OCI-LY7 (cell line): ENCODE measurements at regions of chr11 and their contacts with region 1.

Region 1: GRCh38 chr11:77091146-77091940 is 11.3 kb upstream of the OMP start:
- DNase-seq: peak; percentile 80
- H3K4me3 ChIP-seq: no peak overlapping the region
- H3K27ac ChIP-seq: no peak overlapping the region
- H3K4me1 ChIP-seq: no peaks in the 10 kb centered on the region
- CTCF ChIP-seq: peak; percentile 91

Region 2: DNA sequence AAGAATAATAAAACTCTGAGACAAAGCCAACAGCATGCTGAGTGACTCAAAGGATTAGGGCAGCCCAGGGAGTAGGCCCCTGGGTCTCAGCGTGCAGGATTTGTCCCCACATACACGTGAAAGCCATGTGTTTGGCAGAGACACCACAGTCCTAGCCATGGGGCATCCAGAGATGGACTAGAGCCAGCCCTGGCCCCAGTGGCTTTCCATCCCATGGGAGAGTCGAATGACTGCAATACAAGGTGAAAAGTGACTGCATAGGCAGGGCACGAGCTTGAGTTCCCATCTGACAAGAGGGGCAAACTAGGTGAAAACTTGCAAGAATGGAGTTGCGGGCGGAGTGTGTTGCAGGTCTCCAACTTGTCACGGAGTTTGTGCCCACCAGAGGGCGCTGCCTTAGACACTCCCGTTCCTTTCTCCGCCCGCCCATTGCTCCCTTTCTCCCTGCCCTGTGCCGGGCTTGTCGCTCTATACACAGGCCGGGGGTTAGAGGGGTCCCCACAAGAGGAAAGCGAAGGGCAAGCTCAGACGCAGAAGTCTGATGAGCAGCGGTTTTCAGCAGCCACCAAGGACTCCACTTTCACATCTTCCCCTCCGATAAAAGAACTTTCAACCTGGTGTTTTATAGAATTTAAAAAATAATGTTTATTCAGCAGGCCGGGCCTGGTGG is 284.0 kb before region 1 on chr11:
- CTCF ChIA-PET with region 1: no interaction called
- POLR2A ChIA-PET with region 1: no interaction called
- intact Hi-C with region 1: loop called (anchors 1 kb)
- DNase-seq: peak; percentile 69
- H3K4me3 ChIP-seq: no peak overlapping the region
- H3K27ac ChIP-seq: no peak overlapping the region
- H3K4me1 ChIP-seq: no peaks in the 10 kb centered on the region
- CTCF ChIP-seq: peak; percentile 87

Region 3: DNA sequence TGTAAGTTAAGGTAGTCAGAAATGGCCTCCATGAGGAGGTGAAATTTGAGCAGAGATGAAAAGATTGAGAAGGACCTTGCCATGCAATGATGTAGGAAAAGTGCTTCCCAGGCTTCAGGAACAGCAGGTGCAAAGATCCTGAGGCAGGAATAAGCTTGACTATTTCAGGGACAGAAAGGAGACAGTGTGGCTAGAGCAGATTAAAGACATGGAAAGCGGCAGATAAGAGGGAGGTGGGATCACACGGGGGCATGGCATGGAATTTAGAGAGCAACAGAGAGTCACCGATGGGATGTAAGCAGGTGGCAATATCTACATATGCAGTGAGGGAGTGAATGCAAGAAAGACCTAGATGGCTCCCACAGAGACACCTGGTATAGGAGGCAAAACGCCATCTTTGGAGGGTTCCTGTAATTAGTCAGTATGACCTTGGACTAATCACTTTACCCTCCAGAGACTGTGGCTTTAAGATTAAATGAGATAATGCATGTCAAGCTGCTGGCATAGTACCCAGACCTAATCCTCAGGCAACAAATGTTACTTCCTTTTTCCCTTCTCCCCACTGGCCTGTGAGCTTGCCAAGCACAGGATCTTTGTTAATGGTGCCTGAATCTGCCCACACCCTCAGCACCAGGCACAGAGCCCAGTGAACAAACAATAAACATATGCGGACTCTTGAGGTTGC is 255.3 kb before region 1 on chr11:
- CTCF ChIA-PET with region 1: no interaction called
- POLR2A ChIA-PET with region 1: no interaction called
- intact Hi-C with region 1: no loop called
- DNase-seq: no peak
- H3K4me3 ChIP-seq: no peak overlapping the region
- H3K27ac ChIP-seq: no peak overlapping the region
- H3K4me1 ChIP-seq: no peaks in the 10 kb centered on the region
- CTCF ChIP-seq: no peak

Region 4: GRCh38 chr11:76962583-76963416 is 128.5 kb before region 1 on chr11:
- CTCF ChIA-PET with region 1: no interaction called
- POLR2A ChIA-PET with region 1: no interaction called
- intact Hi-C with region 1: no loop called
- DNase-seq: no peak
- H3K4me3 ChIP-seq: no peak overlapping the region
- H3K27ac ChIP-seq: no peak overlapping the region
- H3K4me1 ChIP-seq: no peaks in the 10 kb centered on the region
- CTCF ChIP-seq: no peak

Region 5: GRCh38 chr11:76997512-76997911 is 93.8 kb before region 1 on chr11:
- CTCF ChIA-PET with region 1: no interaction called
- POLR2A ChIA-PET with region 1: no interaction called
- intact Hi-C with region 1: no loop called
- DNase-seq: no peak
- H3K4me3 ChIP-seq: no peak overlapping the region
- H3K27ac ChIP-seq: no peak overlapping the region
- H3K4me1 ChIP-seq: no peaks in the 10 kb centered on the region
- CTCF ChIP-seq: no peak

Region 6: DNA sequence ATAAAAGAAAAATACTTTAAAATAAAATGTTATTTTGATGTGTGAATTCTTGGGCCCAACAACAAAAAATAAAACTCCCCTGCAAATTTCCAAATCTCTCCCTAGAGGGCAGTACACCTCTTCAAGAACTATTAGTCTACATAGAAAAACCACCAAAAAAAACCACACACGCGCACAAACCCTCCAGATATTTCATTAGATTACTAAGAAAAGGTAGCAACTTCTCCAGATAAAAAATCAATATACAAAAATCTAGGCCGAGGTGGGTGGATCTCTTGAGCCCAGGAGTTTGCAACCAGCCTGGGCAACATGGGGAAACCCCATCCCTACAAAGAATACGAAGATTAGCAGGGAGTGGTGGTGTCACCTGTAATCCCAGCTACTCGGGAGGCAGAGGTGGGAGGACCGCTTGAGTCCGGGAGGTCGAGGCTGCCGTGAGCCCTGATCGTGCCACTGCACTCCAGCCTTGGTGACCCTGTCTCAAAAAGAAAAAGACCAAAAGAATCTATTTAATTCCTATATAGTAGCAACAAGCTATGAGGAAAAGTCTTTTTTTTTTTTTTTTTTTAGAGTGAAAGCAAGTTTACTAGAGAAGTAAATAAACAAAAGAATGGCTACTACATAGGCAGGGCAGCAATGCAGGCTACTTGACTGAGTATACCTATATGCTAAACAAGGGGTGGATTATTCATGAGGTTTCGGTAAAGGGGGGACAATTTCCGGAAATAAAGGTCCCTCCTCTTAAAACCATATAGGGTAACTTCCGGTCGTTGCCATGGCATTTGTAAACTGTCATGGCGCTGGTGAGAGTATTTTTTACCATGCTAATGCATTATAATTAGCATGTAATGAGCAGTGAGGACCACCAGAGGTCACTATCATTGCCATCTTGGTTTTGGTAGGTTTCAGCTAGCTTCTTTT is 44.1 kb before region 1 on chr11:
- CTCF ChIA-PET with region 1: interaction called, 11 read pairs
- POLR2A ChIA-PET with region 1: interaction called, 3 read pairs
- intact Hi-C with region 1: loop called (anchors 1 kb)
- DNase-seq: peak; percentile 94
- H3K4me3 ChIP-seq: peak overlapping the region; percentile 50
- H3K27ac ChIP-seq: no peak overlapping the region
- H3K4me1 ChIP-seq: peaks cover 6% of the 10 kb centered on the region
- CTCF ChIP-seq: peak; percentile 85

Region 7: GRCh38 chr11:77066229-77067042 is 24.9 kb before region 1 on chr11 and contains the start of gene CAPN5:
- CTCF ChIA-PET with region 1: no interaction called
- POLR2A ChIA-PET with region 1: no interaction called
- intact Hi-C with region 1: loop called (anchors 1 kb)
- DNase-seq: peak; percentile 90
- H3K4me3 ChIP-seq: peak within 1 kb of the TSS; percentile 80
- H3K27ac ChIP-seq: no peak within 1 kb of the TSS
- H3K4me1 ChIP-seq: peaks cover 9% of the 10 kb centered on the region
- CTCF ChIP-seq: peak; percentile 52; the same call in 1 of the 2 replicates
- total RNA-seq, gene CAPN5: 0.98 and 1.4 TPM in 2 replicates

Region 8: DNA sequence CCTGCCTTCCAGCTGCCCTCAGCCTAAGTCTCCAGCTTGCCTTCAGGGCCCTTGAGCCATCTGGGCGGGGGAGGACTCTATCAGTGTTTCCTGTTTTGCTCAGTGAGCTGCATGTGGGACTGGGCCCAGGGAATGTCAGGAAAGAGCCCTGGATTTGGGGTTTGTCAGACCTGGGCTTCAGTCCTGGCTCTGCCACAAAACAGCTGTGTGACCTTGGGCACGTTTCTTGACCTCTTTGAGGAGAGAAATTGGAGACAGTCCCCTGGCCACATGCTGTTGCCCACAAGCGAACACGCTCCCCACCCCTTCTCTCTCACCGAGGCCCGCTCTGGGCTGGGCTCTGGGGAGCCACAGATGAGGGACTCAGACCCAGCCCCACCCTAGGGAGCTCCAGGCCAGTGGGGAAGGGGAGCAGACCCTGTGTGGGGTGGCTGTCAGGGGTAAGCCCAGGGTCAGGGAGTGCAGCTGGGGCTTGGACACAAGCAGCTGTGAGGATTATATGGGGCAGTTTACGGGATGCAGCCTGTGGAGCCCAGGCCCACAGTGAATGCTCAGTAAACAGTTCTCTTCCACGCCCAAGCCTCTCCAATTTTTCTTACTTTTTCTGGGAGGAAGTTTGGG is 49.0 kb after region 1 on chr11:
- CTCF ChIA-PET with region 1: no interaction called
- POLR2A ChIA-PET with region 1: no interaction called
- intact Hi-C with region 1: no loop called
- DNase-seq: no peak
- H3K4me3 ChIP-seq: no peak overlapping the region
- H3K27ac ChIP-seq: no peak overlapping the region
- H3K4me1 ChIP-seq: no peaks in the 10 kb centered on the region
- CTCF ChIP-seq: no peak